ENCODE measurements at regions of chr6 and their contacts with region 1.

Region 1: GRCh38 chr6:116531675-116532570 is 13.6 kb downstream of the TRAPPC3L start:
- DNase-seq: no peak
- H3K4me3 ChIP-seq: no peak overlapping the region
- H3K27ac ChIP-seq: no peak overlapping the region
- H3K4me1 ChIP-seq: peaks cover 0 to 20% (median 0%) of the 10 kb centered on the region in 3 donors
- H3K27me3 ChIP-seq: no peaks in the 10 kb centered on the region
- CTCF ChIP-seq: peak; percentile 61 to 83 (median 76)
- POLR2A ChIP-seq: no peak

Region 2: DNA sequence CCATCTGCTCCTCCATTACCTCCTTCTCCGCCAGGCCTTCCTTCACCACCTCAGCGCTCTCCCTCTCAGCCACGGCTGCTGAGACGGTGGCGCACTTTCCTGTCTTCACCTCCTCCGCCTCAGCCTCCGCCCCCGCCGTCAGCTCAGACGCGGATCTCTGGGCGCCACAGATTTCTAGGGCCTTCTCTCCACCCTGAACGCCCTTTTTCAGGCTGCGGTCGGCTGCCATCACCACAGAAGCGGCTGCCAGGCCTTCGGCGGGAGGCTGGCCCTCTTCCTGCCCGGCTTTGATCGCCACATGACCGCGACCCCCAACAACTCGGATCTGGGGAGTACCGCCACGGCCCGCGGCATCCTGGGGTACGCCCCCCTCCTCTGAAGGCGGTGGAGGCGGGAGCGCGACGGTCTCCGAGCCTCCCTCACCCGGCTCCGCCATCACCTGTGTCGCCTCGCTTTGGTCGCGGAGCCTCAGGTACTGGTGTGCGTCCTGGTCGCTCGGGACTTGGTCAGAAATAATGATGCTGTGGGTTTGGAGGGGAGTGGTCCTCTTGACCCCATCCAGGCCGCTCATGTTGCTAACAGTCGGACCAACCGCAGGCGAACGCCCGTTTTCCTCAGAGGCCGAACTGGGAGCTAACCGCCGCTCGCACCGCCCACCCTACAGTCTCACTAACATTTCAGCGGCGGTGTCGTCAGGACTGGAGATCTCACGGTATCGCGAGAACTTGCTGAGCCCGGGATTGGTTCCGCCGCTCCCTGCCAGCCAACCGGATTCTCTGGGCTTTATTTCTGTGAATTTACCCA is 252.5 kb before region 1 on chr6 and contains the start of gene TSPYL1:
- intact Hi-C with region 1: loop called (anchors 10 kb)
- DNase-seq: peak; percentile 82
- H3K4me3 ChIP-seq: peak within 1 kb of the TSS; percentile 72 to 86 (median 82)
- H3K27ac ChIP-seq: peak within 1 kb of the TSS; percentile 97 to 99 (median 98)
- H3K4me1 ChIP-seq: peaks cover 19 to 57% (median 28%) of the 10 kb centered on the region in 3 donors
- H3K27me3 ChIP-seq: no peaks in the 10 kb centered on the region
- CTCF ChIP-seq: peak in 1 of 6 experiments; percentile 9
- POLR2A ChIP-seq: peak in 3 of 4 donors; percentile 98 to 99 (median 98)
- total RNA-seq, gene TSPYL1: 55.5 to 78.3 (median 58.1) TPM